GM10248 (cell line): ENCODE measurements at regions of chr2 and their contacts with region 1.

Region 1: GRCh38 chr2:20650880-20651730 is at the start of gene HS1BP3:
- DNase-seq: peak; percentile 98
- CTCF ChIP-seq: peak; percentile 99

Region 2: DNA sequence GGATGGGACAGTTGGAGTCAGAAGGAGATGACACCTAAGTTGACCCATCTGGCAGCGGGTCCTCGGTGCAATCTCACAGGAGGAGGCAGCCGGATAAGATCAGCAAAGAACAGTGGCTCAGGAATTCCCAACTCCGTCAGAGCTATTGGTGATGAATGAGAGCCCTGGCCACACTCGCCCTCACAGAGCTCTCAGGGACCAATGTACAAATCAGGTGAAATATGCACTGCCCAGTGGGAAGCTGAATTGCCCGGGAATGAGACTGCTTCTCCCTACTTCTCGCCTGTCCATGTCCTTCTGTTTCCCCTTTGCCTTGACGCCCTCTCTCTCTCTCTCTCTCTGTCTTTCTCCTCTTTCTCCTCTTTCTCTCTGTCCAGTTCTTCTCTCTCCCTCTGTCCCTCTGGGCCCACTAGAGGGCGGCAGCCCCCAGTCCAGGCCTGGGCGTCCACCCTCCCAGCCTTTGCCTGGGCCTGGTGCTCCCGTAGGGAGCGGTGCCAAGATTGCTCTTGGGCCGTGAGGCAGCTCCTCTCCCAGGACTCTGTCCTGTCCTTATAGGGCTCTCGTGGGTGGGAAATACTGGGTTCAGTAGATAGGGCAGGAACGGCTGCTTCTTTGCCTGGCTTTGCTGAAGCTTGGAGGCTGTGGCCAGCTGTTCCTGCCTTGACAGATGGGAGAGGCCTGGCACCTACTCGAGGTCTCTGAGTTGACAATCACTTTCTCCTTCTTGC is 272.1 kb before region 1 on chr2:
- CTCF ChIA-PET with region 1: interaction called, 12 read pairs
- POLR2A ChIA-PET with region 1: no interaction called
- DNase-seq: no peak
- CTCF ChIP-seq: peak; percentile 44

Region 3: DNA sequence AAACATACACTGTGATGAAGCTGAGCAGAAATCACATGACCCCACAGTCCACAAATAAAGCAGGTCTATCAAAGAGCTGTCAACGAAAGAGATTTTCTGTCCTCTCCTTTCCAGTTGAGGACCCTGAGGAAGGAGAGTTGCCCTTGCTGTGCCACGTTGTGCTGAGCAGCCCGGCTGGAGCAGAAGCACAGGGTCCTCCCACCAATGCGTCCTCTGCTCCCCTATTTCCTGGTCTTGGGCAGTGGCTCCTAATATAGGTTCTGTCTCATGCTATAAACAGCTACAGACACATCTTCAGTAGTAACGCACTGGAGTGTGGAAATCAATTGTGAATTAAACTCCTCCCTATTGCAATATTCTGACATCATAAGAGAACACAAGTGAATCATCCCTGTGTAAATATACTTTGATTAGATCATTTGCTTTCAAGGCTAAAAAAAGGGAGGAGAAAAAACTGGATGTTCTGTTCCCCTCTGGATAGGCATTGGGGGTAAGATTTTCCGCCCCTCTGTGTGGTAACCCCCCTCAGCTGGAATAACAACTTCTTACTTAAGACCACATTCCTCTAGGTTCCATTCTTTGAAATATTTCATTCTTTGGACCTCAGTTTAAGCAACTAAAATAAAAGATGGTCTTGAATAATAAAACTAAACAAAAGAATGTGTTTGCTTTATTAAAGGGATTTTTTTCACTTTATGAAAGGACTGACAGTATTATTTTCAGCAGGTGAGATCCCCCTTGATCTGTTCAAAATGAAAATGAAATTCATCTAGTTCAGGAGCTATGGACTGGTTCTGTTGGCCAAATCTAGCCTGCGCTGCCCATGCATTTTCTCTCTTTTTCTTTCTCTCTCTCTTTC is 212.5 kb before region 1 on chr2:
- CTCF ChIA-PET with region 1: interaction called, 86 read pairs
- POLR2A ChIA-PET with region 1: no interaction called
- DNase-seq: no peak
- CTCF ChIP-seq: no peak

Region 4: GRCh38 chr2:20635675-20636584 is 15.2 kb before region 1 on chr2:
- CTCF ChIA-PET with region 1: interaction called, 101 read pairs
- POLR2A ChIA-PET with region 1: no interaction called
- DNase-seq: peak; percentile 83
- CTCF ChIP-seq: peak; percentile 95

Region 5: GRCh38 chr2:20744366-20745335 is 93.5 kb after region 1 on chr2:
- CTCF ChIA-PET with region 1: no interaction called
- POLR2A ChIA-PET with region 1: no interaction called
- DNase-seq: no peak
- CTCF ChIP-seq: no peak

Region 6: DNA sequence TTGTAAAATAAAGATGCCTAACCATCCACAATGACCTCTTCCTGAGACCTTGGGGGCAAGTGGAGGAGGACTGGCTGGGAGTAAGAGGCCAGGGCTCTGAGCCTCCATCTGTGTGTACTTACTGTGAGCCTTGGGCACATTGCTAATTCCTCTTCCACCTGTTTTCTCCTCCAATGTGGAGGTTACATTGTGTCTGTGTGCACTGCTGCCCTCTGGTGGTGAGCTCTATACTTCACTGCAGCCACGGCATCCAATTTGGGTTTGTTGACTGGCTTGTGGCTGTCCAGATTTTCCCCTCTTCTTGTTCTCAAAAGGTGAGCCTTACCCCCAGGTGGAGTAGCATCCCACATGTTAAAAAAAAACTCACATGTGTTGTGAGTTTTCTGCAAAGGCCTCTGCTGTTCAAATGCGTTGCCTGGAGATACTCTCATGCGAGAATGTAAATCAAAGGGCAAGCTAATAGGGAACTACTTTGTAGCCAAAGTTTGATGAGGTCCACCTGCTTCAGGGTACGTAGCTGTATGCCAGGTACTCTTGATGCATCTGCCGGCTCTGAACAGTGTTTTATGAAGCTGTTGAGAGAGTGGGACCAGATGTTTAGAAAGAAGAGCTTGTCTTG is 311.9 kb after region 1 on chr2:
- CTCF ChIA-PET with region 1: interaction called, 15 read pairs
- POLR2A ChIA-PET with region 1: no interaction called
- DNase-seq: peak; percentile 63
- CTCF ChIP-seq: peak; percentile 92